ENCODE measurements at regions of chr20 and their contacts with region 1.

Region 1: DNA sequence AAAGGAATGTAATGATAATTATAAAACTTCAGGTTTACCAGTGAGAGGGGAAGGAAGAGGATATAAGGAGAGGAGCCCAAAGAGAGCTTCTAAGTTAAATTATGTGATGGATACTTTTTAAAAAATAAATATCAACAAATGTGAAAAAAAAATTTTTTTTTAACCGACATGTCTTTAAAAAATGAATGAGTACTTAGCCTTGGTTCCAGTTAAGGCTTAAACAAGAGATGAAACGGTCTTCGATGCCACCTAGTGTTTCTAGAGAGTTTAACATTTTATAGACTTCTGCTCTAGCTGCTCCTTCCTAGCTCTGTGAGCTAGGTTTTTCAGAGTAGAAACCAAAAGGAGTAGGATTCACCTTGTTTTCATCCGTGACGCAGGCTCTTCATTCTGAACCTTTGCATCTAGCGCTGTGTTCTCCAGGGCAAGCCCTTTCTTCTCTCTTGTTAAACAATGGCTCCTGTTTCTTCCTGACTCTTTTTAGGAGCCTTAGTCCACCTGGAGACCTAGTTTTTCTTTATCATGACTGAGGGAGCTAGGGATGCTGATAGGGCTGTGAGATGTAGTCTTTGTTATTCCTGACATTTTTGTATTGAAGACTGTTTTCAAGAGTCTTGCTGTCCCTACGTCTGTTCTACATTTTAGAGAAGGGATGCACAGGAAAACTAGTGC is 42.4 kb upstream of the GNRH2 start:
- DNase-seq: peak; percentile 60 to 80
- ATAC-seq: peak; percentile 98 to 99
- H3K4me3 ChIP-seq: no peak overlapping the region
- H3K27ac ChIP-seq: no peak overlapping the region
- H3K4me1 ChIP-seq: no peaks in the 10 kb centered on the region
- CTCF ChIP-seq: peak; percentile 92
- EP300 ChIP-seq: no peak
- POLR2A ChIP-seq: no peak
- RAD21 ChIP-seq: peak; percentile 86 to 89

Region 2: GRCh38 chr20:2873747-2874041 is 127.3 kb before region 1 on chr20:
- CTCF ChIA-PET with region 1: interaction called, 11 read pairs
- POLR2A ChIA-PET with region 1: interaction called, 8 read pairs
- DNase-seq: peak in 1 of 2 experiments; percentile 35
- ATAC-seq: no peak
- H3K4me3 ChIP-seq: peak overlapping the region; percentile 87
- H3K27ac ChIP-seq: peak overlapping the region; percentile 90 to 98
- H3K4me1 ChIP-seq: peaks cover 28% of the 10 kb centered on the region
- CTCF ChIP-seq: no peak
- EP300 ChIP-seq: no peak
- POLR2A ChIP-seq: no peak
- RAD21 ChIP-seq: no peak

Region 3: DNA sequence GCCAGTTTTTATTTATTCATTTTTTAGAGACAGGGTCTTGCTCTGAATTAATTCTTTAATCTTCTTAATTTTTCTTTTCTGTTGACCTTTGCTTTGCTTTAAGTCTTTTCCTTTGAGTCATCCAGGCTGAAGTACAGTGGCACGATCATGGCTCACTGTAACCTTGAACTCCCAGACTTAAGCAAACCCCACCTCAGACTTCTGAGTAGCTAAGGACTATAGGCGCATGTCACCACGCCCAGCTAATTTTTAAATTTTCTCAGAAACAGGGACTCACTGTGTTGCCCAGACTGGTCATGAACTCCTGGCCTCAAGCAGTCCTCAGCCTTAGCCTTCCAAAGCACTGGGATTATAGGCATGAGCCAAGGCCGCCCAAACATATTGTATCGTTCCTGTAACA is 28.9 kb before region 1 on chr20:
- CTCF ChIA-PET with region 1: interaction called, 10 read pairs
- POLR2A ChIA-PET with region 1: no interaction called
- DNase-seq: no peak
- ATAC-seq: no peak
- H3K4me3 ChIP-seq: no peak overlapping the region
- H3K27ac ChIP-seq: no peak overlapping the region
- H3K4me1 ChIP-seq: 0 out of 3 replicates have a peak, but pooled peaks cover 5% of the 10 kb centered on the region
- CTCF ChIP-seq: no peak
- EP300 ChIP-seq: no peak
- POLR2A ChIP-seq: no peak
- RAD21 ChIP-seq: no peak

Region 4: GRCh38 chr20:2984956-2985661 is 15.9 kb before region 1 on chr20:
- CTCF ChIA-PET with region 1: interaction called, 31 read pairs
- POLR2A ChIA-PET with region 1: no interaction called
- DNase-seq: no peak
- ATAC-seq: no peak
- H3K4me3 ChIP-seq: no peak overlapping the region
- H3K27ac ChIP-seq: no peak overlapping the region
- H3K4me1 ChIP-seq: peaks cover 7% of the 10 kb centered on the region; the same call in 1 of the 3 replicates
- CTCF ChIP-seq: no peak
- EP300 ChIP-seq: no peak
- POLR2A ChIP-seq: no peak
- RAD21 ChIP-seq: no peak

Region 5: DNA sequence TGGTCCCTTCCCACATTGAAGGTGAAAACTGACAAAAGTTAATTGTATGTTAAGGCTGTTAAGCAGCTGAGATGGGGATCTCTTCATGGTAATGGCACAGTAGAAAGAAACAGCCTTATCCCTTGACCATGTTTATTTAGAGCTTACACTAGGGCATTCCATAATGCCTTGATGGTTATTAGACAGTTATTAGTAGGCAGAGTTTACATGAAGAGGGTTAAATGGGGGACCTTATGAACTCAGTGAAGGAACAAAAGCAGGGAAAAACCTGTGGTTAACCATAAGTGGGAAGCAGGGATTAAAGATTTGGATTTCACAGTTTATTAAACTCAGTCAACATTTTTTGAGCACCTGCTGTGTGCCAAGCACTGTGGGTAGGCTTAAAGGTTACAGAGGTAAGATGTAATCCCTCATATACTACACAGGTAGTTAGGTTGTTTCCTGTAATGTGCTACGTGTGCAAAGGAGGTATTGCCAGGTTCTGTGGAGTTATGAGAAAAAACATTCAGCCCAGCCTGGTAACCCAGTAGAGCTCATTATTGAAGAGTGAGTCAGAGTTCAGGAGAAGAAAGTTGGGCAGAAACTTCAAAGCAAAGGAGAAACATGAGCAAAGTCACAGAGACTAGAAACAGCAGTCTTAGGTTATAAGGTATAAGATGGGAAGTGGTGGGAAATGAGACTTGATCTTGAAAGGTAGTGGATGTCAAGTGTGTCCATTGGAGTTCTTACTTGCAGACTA is 10.2 kb after region 1 on chr20:
- CTCF ChIA-PET with region 1: interaction called, 27 read pairs
- POLR2A ChIA-PET with region 1: no interaction called
- DNase-seq: no peak
- ATAC-seq: peak in 1 of 2 experiments; percentile 42; a peak in 3 of 6 replicates
- H3K4me3 ChIP-seq: no peak overlapping the region
- H3K27ac ChIP-seq: no peak overlapping the region
- H3K4me1 ChIP-seq: peaks cover 11% of the 10 kb centered on the region; the same call in 2 of the 3 replicates
- CTCF ChIP-seq: no peak
- EP300 ChIP-seq: no peak
- POLR2A ChIP-seq: no peak
- RAD21 ChIP-seq: no peak

Measured in A549 (cell line).